Naive thymus-derived CD4-positive, alpha-beta T cell (primary cell): ENCODE measurements at regions of chr17 and their contacts with region 1.

Region 1: GRCh38 chr17:39738931-39739884 is 1.5 kb downstream of the GRB7 start:
- DNase-seq: no peak
- ATAC-seq: peak; percentile 2
- H3K4me3 ChIP-seq: no peak overlapping the region
- H3K4me3 Mint-ChIP-seq: peak overlapping the region; percentile 69 to 89 (median 82)
- H3K27ac ChIP-seq: no peak overlapping the region
- H3K27ac Mint-ChIP-seq: peak overlapping the region in 4 of 9 donors; percentile 29 to 80 (median 41)
- H3K4me1 ChIP-seq: peaks cover 0 to 12% of the 10 kb centered on the region in 2 donors
- H3K4me1 Mint-ChIP-seq: peaks cover 5 to 29% (median 15%) of the 10 kb centered on the region in 7 donors
- H3K27me3 ChIP-seq: no peaks in the 10 kb centered on the region
- H3K27me3 Mint-ChIP-seq: peaks cover 6 to 32% (median 13%) of the 10 kb centered on the region in 5 donors

Region 2: DNA sequence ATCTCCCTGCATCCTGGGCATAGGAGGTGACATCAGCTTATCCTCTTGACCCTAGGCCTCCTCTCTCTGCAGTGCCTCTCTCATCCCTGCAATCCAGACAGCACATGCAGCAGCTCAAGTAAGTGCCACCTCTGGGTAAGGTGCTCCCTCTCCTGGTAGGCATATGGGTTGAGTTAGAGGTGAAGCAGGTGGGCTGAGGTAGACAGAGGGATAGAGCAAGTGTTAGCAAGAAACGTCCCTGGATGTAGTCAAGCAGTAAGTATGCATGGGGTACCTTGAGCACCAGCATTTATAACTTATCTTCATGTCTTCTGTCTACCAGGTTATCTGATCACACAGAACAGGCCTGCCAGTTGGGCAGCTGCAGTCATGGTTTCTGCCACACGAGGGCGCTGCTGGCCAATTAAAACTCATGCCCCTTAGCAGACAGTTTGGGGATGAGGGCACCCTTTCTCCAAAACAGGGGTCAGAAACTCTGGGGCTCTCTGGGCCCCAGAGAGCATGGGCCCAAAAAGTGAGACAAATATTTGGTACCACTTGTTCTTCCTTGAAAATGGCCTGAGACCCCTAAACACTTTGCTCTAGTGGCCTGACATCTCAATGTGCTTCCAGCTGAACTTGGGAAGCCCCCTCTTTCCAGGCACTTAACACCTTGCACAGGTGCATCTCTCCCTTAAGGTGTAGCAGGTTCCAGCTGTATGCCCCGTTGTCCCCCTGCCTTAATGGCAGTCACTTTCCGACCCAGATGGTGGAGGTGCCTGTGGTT is 191.3 kb before region 1 on chr17:
- CTCF ChIA-PET with region 1: no interaction called
- POLR2A ChIA-PET with region 1: no interaction called
- intact Hi-C with region 1: loop called in 1 of 2 experiments (anchors 5 kb)
- DNase-seq: peak; percentile 43 to 81 (median 68)
- ATAC-seq: peak; percentile 87
- H3K4me3 ChIP-seq: no peak overlapping the region
- H3K4me3 Mint-ChIP-seq: no peak overlapping the region
- H3K27ac ChIP-seq: no peak overlapping the region
- H3K27ac Mint-ChIP-seq: no peak overlapping the region
- H3K4me1 ChIP-seq: no peaks in the 10 kb centered on the region
- H3K4me1 Mint-ChIP-seq: peaks cover 0 to 2% (median 0%) of the 10 kb centered on the region in 7 donors
- H3K27me3 ChIP-seq: no peaks in the 10 kb centered on the region
- H3K27me3 Mint-ChIP-seq: no peaks in the 10 kb centered on the region

Region 3: DNA sequence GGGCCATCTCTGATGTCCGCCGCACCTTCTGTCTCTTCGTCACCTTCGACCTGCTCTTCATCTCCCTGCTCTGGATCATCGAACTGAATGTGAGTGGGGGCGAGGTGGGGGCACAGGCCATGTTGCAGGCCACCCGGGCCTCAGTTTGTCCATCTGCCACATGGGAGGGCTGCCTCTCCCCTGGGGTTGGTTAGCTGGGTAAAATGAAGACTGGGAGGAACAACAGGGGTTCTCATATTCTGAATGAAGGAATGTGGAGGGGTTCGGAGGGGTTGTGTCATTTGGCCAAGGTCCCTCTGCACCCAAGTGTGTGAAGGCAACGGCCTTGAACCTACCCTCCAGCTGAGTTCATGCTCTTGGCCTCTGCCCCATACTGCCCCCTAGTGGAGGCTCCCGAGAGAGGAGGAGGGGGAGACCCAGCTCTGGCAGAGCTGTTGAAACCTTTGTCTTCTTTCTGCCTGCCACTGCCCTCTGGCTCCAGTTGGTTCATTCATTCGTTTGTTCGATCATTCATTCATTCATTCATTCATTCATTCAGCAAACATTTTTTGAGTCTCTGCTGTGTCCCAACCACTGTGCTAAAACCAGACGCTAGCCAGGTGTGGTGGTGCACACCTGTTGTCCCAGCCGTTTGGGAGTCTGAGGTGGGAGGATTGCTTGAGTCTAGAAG is 85.4 kb before region 1 on chr17:
- CTCF ChIA-PET with region 1: no interaction called
- POLR2A ChIA-PET with region 1: no interaction called
- intact Hi-C with region 1: no loop called
- DNase-seq: peak; percentile 58 to 83 (median 71)
- ATAC-seq: peak; percentile 91
- H3K4me3 ChIP-seq: no peak overlapping the region
- H3K4me3 Mint-ChIP-seq: no peak overlapping the region
- H3K27ac ChIP-seq: peak overlapping the region; percentile 36
- H3K27ac Mint-ChIP-seq: peak overlapping the region in 5 of 9 donors; percentile 21 to 74 (median 51)
- H3K4me1 ChIP-seq: peaks cover 4 to 23% of the 10 kb centered on the region in 2 donors
- H3K4me1 Mint-ChIP-seq: peaks cover 24 to 74% (median 63%) of the 10 kb centered on the region in 7 donors
- H3K27me3 ChIP-seq: no peaks in the 10 kb centered on the region
- H3K27me3 Mint-ChIP-seq: no peaks in the 10 kb centered on the region

Region 4: DNA sequence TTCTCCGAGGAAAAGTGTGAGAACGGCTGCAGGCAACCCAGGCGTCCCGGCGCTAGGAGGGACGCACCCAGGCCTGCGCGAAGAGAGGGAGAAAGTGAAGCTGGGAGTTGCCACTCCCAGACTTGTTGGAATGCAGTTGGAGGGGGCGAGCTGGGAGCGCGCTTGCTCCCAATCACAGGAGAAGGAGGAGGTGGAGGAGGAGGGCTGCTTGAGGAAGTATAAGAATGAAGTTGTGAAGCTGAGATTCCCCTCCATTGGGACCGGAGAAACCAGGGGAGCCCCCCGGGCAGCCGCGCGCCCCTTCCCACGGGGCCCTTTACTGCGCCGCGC is 39.4 kb before region 1 on chr17 and contains the start of gene ERBB2:
- CTCF ChIA-PET with region 1: no interaction called
- POLR2A ChIA-PET with region 1: no interaction called
- intact Hi-C with region 1: no loop called
- DNase-seq: no peak
- ATAC-seq: no peak
- H3K4me3 ChIP-seq: no peak within 1 kb of the TSS
- H3K4me3 Mint-ChIP-seq: peak within 1 kb of the TSS in 9 of 10 donors; percentile 18 to 72 (median 45)
- H3K27ac ChIP-seq: no peak within 1 kb of the TSS
- H3K27ac Mint-ChIP-seq: peak within 1 kb of the TSS in 1 of 9 donors; percentile 13
- H3K4me1 ChIP-seq: no peaks in the 10 kb centered on the region
- H3K4me1 Mint-ChIP-seq: peaks cover 5 to 18% (median 10%) of the 10 kb centered on the region in 7 donors
- H3K27me3 ChIP-seq: peaks cover 3 to 14% of the 10 kb centered on the region in 2 donors
- H3K27me3 Mint-ChIP-seq: peaks cover 28 to 48% (median 29%) of the 10 kb centered on the region in 5 donors
- total RNA-seq, gene ERBB2: 3.6 to 10.5 (median 6.6) TPM

Region 5: DNA sequence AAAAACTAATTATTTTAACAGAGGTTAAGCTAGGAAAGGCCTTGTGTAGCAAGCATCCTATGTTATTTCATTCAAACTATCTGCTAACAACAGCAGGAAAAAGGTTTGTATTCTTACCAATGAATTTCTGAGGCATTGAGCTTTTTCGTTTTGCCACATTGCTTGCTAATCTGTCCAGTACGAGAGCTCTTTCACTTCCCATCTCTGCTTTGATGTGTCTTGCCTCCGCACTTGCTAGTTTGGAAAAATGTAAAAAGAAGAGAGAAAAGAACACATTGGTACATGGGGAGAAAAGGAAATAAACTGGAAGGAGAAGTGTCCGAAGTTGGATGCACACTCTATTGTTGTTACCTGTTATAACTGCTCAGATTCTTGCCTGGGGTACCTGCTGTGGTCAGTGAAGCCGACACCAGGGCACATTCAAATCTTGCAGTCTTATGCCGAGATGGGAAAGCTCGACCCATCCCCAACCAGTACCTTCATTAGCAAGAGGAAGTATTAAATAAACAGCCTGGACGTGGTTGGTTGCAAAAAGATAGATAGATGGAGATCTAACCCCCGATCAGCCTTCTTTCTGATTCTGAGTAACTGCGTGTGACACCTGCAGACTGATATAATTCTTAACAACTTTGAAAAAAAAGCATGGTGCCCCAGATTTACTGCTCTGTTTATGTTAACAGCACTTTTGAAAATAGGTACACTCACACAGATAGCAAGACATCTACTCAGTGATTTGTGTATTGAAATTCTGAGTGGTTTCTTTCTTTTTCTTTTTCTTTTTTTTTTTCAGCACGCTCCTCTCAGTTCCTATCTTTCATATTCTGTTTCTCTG is 38.5 kb after region 1 on chr17:
- CTCF ChIA-PET with region 1: no interaction called
- POLR2A ChIA-PET with region 1: no interaction called
- intact Hi-C with region 1: no loop called
- DNase-seq: peak in 1 of 9 donors; percentile 40
- ATAC-seq: peak; percentile 72
- H3K4me3 ChIP-seq: peak overlapping the region; percentile 74
- H3K4me3 Mint-ChIP-seq: peak overlapping the region; percentile 79 to 95 (median 90)
- H3K27ac ChIP-seq: peak overlapping the region; percentile 77
- H3K27ac Mint-ChIP-seq: peak overlapping the region; percentile 68 to 98 (median 94)
- H3K4me1 ChIP-seq: peaks cover 61 to 75% of the 10 kb centered on the region in 2 donors
- H3K4me1 Mint-ChIP-seq: peaks cover 60 to 91% (median 86%) of the 10 kb centered on the region in 7 donors
- H3K27me3 ChIP-seq: no peaks in the 10 kb centered on the region
- H3K27me3 Mint-ChIP-seq: no peaks in the 10 kb centered on the region

Region 6: GRCh38 chr17:39863918-39864746 is 124.9 kb after region 1 on chr17 and contains the start of gene IKZF3:
- CTCF ChIA-PET with region 1: no interaction called
- POLR2A ChIA-PET with region 1: no interaction called
- intact Hi-C with region 1: no loop called
- DNase-seq: peak; percentile 69 to 87 (median 76)
- ATAC-seq: peak; percentile 89
- H3K4me3 ChIP-seq: peak within 1 kb of the TSS; percentile 69
- H3K4me3 Mint-ChIP-seq: peak within 1 kb of the TSS; percentile 86 to 98 (median 94)
- H3K27ac ChIP-seq: peak within 1 kb of the TSS; percentile 99
- H3K27ac Mint-ChIP-seq: peak within 1 kb of the TSS; percentile 86 to 98 (median 97)
- H3K4me1 ChIP-seq: peaks cover 27 to 33% of the 10 kb centered on the region in 2 donors
- H3K4me1 Mint-ChIP-seq: peaks cover 22 to 88% (median 68%) of the 10 kb centered on the region in 7 donors
- H3K27me3 ChIP-seq: no peaks in the 10 kb centered on the region
- H3K27me3 Mint-ChIP-seq: no peaks in the 10 kb centered on the region
- total RNA-seq, gene IKZF3: 26.1 to 77.8 (median 61.1) TPM